T-cell (primary cell): ENCODE measurements at regions of chr1 and their contacts with region 1.

Region 1: DNA sequence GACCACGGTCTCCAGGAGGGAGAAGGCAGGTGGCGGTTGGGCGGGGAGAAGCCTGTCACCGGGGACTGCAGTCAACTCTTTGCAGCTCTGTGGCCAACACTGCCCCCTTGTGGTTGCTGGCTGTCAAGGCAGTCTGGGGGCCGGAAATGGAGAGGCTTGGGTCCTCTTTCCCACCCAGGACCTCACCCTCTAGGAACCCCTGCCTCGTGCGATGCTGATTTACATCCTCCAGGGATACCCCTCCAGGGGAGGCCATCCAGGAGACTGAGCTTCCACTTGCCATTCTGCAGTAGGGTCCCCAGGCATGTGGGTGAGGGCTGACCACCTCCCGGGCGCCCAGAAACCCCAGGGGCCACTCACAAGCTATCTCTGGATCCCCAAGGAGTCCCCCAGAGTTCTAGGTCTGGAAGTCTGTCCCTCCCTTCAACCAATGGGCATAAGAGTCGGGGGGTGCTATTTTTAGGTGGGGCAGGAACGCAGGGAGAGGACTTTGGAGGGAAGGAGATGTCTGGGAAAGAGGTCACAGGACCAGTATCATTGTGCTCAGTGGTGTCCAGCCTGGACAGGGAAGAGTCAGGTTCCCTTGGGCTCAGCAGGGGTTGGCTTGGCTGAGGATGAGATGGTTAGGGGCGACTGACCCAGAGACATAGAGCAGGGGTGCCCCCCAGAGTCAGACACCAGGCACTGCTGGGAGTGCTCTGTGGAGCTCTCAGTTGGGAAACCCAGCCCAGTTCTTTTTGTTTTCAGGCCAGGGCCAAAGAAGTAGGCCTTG is 7.1 kb upstream of the GPR61 start:
- DNase-seq: peak; percentile 70 to 94 (median 86)
- ATAC-seq: peak; percentile 89 to 90 (median 90)
- H3K4me3 ChIP-seq: peak overlapping the region; percentile 2 to 42
- H3K4me3 Mint-ChIP-seq: peak overlapping the region; percentile 74 to 80 (median 77)
- H3K27ac ChIP-seq: peak overlapping the region; percentile 30
- H3K27ac Mint-ChIP-seq: peak overlapping the region; percentile 88 to 90
- H3K4me1 ChIP-seq: peaks cover 10 to 31% of the 10 kb centered on the region in 2 experiments
- H3K4me1 Mint-ChIP-seq: peaks cover 30 to 33% (median 31%) of the 10 kb centered on the region in 3 donors
- H3K27me3 ChIP-seq: peaks cover 0 to 5% of the 10 kb centered on the region in 2 experiments
- H3K27me3 Mint-ChIP-seq: no peaks in the 10 kb centered on the region

Region 2: GRCh38 chr1:109266960-109267735 is 265.4 kb before region 1 on chr1:
- CTCF ChIA-PET with region 1: interaction called, 5 to 12 read pairs
- POLR2A ChIA-PET with region 1: no interaction called
- DNase-seq: no peak
- ATAC-seq: no peak
- H3K4me3 ChIP-seq: no peak overlapping the region
- H3K4me3 Mint-ChIP-seq: no peak overlapping the region
- H3K27ac ChIP-seq: no peak overlapping the region
- H3K27ac Mint-ChIP-seq: no peak overlapping the region
- H3K4me1 ChIP-seq: peaks cover 0 to 7% of the 10 kb centered on the region in 2 experiments
- H3K4me1 Mint-ChIP-seq: peaks cover 2 to 6% (median 3%) of the 10 kb centered on the region in 3 donors
- H3K27me3 ChIP-seq: peaks cover 0 to 5% of the 10 kb centered on the region in 2 experiments
- H3K27me3 Mint-ChIP-seq: no peaks in the 10 kb centered on the region

Region 3: GRCh38 chr1:109426278-109427170 is 106.0 kb before region 1 on chr1 and contains the start of gene PSMA5:
- CTCF ChIA-PET with region 1: interaction called in 1 of 2 experiments, 22 read pairs
- POLR2A ChIA-PET with region 1: interaction called, 3 to 8 read pairs
- DNase-seq: peak; percentile 82 to 98 (median 95)
- ATAC-seq: peak; percentile 94 to 95 (median 94)
- H3K4me3 ChIP-seq: peak within 1 kb of the TSS; percentile 88 to 95
- H3K4me3 Mint-ChIP-seq: peak within 1 kb of the TSS; percentile 87 to 95 (median 95)
- H3K27ac ChIP-seq: peak within 1 kb of the TSS; percentile 89
- H3K27ac Mint-ChIP-seq: peak within 1 kb of the TSS; percentile 96 to 97
- H3K4me1 ChIP-seq: peaks cover 21 to 25% of the 10 kb centered on the region in 2 experiments
- H3K4me1 Mint-ChIP-seq: peaks cover 42 to 48% (median 42%) of the 10 kb centered on the region in 3 donors
- H3K27me3 ChIP-seq: no peaks in the 10 kb centered on the region
- H3K27me3 Mint-ChIP-seq: no peaks in the 10 kb centered on the region
- total RNA-seq, gene PSMA5: 41.1 to 91.2 (median 75.5) TPM

Region 4: GRCh38 chr1:109493805-109494539 is 38.6 kb before region 1 on chr1 and contains the start of gene CYB561D1:
- CTCF ChIA-PET with region 1: interaction called, 294 to 375 read pairs
- POLR2A ChIA-PET with region 1: interaction called in 1 of 2 experiments, 3 read pairs
- DNase-seq: peak; percentile 75 to 93 (median 86)
- ATAC-seq: peak; percentile 89 to 95 (median 92)
- H3K4me3 ChIP-seq: peak within 1 kb of the TSS; percentile 85 to 91
- H3K4me3 Mint-ChIP-seq: peak within 1 kb of the TSS; percentile 90 to 96 (median 94)
- H3K27ac ChIP-seq: no peak within 1 kb of the TSS
- H3K27ac Mint-ChIP-seq: peak within 1 kb of the TSS; percentile 79 to 97
- H3K4me1 ChIP-seq: peaks cover 27 to 68% of the 10 kb centered on the region in 2 experiments
- H3K4me1 Mint-ChIP-seq: peaks cover 48 to 59% (median 59%) of the 10 kb centered on the region in 3 donors
- H3K27me3 ChIP-seq: no peaks in the 10 kb centered on the region
- H3K27me3 Mint-ChIP-seq: no peaks in the 10 kb centered on the region
- total RNA-seq, gene CYB561D1: 23.6 to 42.6 (median 39.5) TPM

Region 5: GRCh38 chr1:109509176-109510134 is 23.1 kb before region 1 on chr1 and contains the start of gene AMIGO1:
- CTCF ChIA-PET with region 1: interaction called, 21 to 375 read pairs
- POLR2A ChIA-PET with region 1: interaction called in 1 of 2 experiments, 5 read pairs
- DNase-seq: peak in 34 of 35 experiments; percentile 21 to 84 (median 57)
- ATAC-seq: peak; percentile 77 to 86 (median 79)
- H3K4me3 ChIP-seq: peak within 1 kb of the TSS; percentile 64 to 72
- H3K4me3 Mint-ChIP-seq: peak within 1 kb of the TSS; percentile 89 to 93 (median 89)
- H3K27ac ChIP-seq: peak within 1 kb of the TSS; percentile 45
- H3K27ac Mint-ChIP-seq: peak within 1 kb of the TSS; percentile 86 to 91
- H3K4me1 ChIP-seq: peaks cover 26 to 70% of the 10 kb centered on the region in 2 experiments
- H3K4me1 Mint-ChIP-seq: peaks cover 63 to 71% (median 69%) of the 10 kb centered on the region in 3 donors
- H3K27me3 ChIP-seq: no peaks in the 10 kb centered on the region
- H3K27me3 Mint-ChIP-seq: peaks cover 0 to 2% of the 10 kb centered on the region in 2 donors
- total RNA-seq, gene AMIGO1: 13.2 to 28.2 (median 21.5) TPM

Region 6: GRCh38 chr1:109548321-109549267 is 16.0 kb after region 1 on chr1 and contains the start of gene GNAI3:
- CTCF ChIA-PET with region 1: interaction called, 9 to 23 read pairs
- POLR2A ChIA-PET with region 1: no interaction called
- DNase-seq: peak; percentile 89 to 99 (median 96)
- ATAC-seq: peak; percentile 93 to 95 (median 94)
- H3K4me3 ChIP-seq: peak within 1 kb of the TSS; percentile 83 to 93
- H3K4me3 Mint-ChIP-seq: peak within 1 kb of the TSS; percentile 90 to 99 (median 95)
- H3K27ac ChIP-seq: peak within 1 kb of the TSS; percentile 80
- H3K27ac Mint-ChIP-seq: peak within 1 kb of the TSS; percentile 98 to 99
- H3K4me1 ChIP-seq: peaks cover 7 to 30% of the 10 kb centered on the region in 2 experiments
- H3K4me1 Mint-ChIP-seq: peaks cover 59 to 63% (median 61%) of the 10 kb centered on the region in 3 donors
- H3K27me3 ChIP-seq: no peaks in the 10 kb centered on the region
- H3K27me3 Mint-ChIP-seq: no peaks in the 10 kb centered on the region
- total RNA-seq, gene GNAI3: 5.4 to 7.2 (median 6.5) TPM

Region 7: GRCh38 chr1:109863667-109864046 is 331.1 kb after region 1 on chr1:
- CTCF ChIA-PET with region 1: no interaction called
- POLR2A ChIA-PET with region 1: no interaction called
- DNase-seq: no peak
- ATAC-seq: no peak
- H3K4me3 ChIP-seq: no peak overlapping the region
- H3K4me3 Mint-ChIP-seq: no peak overlapping the region
- H3K27ac ChIP-seq: no peak overlapping the region
- H3K27ac Mint-ChIP-seq: peak overlapping the region in 1 of 2 donors; percentile 38
- H3K4me1 ChIP-seq: peaks cover 0 to 4% of the 10 kb centered on the region in 2 experiments
- H3K4me1 Mint-ChIP-seq: peaks cover 8 to 12% (median 12%) of the 10 kb centered on the region in 3 donors
- H3K27me3 ChIP-seq: no peaks in the 10 kb centered on the region
- H3K27me3 Mint-ChIP-seq: no peaks in the 10 kb centered on the region